HAP-1 (cell line): ENCODE measurements at regions of chr11 and their contacts with region 1.

Region 1: GRCh38 chr11:108497317-108498045 is 703 bp downstream of the POGLUT3 start:
- DNase-seq: peak; percentile 88 to 93
- H3K4me3 ChIP-seq: peak overlapping the region; percentile 35
- H3K4me1 ChIP-seq: peaks cover 16% of the 10 kb centered on the region
- H3K27me3 ChIP-seq: no peaks in the 10 kb centered on the region

Region 2: GRCh38 chr11:108222686-108223448 is 274.6 kb before region 1 on chr11 and contains the start of gene ATM:
- in situ Hi-C with region 1: loop called (anchors 10 kb)
- DNase-seq: peak; percentile 98 to 99
- H3K4me3 ChIP-seq: peak within 1 kb of the TSS; percentile 69
- H3K4me1 ChIP-seq: peaks cover 25% of the 10 kb centered on the region
- H3K27me3 ChIP-seq: no peaks in the 10 kb centered on the region

Region 3: DNA sequence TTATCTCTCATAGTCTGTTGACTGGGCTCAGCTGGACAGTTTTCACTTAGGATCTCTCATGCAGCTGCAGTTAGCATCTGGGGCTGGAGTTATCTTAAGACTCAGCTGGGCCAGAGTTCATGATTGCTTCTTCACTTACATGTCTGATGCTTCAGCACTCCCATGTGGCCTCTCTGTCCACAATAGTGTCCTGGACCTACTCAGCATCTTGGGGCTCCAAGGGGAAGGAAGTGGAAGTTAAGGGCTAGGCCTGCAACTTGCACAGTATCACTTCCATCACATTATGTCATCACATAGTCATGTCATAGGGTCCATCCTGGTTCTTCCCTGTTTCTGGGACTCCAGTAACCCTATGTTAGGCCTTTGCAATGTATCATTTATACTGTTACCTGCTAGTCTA is 146.0 kb before region 1 on chr11:
- in situ Hi-C with region 1: no loop called
- DNase-seq: no peak
- H3K4me3 ChIP-seq: no peak overlapping the region
- H3K4me1 ChIP-seq: no peaks in the 10 kb centered on the region
- H3K27me3 ChIP-seq: no peaks in the 10 kb centered on the region

Region 4: GRCh38 chr11:108624196-108624945 is 126.9 kb after region 1 on chr11:
- in situ Hi-C with region 1: no loop called
- DNase-seq: no peak
- H3K4me3 ChIP-seq: no peak overlapping the region
- H3K4me1 ChIP-seq: no peaks in the 10 kb centered on the region
- H3K27me3 ChIP-seq: no peaks in the 10 kb centered on the region